HCT116 (cell line): ENCODE measurements at regions of chr5 and their contacts with region 1.

Region 1: GRCh38 chr5:67998709-67999261 is 216.8 kb upstream of the PIK3R1 start:
- DNase-seq: peak; percentile 64
- ATAC-seq: peak; percentile 89
- H3K4me3 ChIP-seq: peak overlapping the region in 1 of 2 experiments; percentile 4; a peak in 2 of 4 replicates
- H3K27ac ChIP-seq: no peak overlapping the region; the same call in 1 of the 2 replicates
- H3K4me1 ChIP-seq: peaks cover 4 to 27% of the 10 kb centered on the region in 2 experiments; a peak in 3 of 4 replicates
- H3K27me3 ChIP-seq: no peaks in the 10 kb centered on the region
- CTCF ChIP-seq: no peak
- POLR2A ChIP-seq: no peak
- RAD21 ChIP-seq: no peak

Region 2: DNA sequence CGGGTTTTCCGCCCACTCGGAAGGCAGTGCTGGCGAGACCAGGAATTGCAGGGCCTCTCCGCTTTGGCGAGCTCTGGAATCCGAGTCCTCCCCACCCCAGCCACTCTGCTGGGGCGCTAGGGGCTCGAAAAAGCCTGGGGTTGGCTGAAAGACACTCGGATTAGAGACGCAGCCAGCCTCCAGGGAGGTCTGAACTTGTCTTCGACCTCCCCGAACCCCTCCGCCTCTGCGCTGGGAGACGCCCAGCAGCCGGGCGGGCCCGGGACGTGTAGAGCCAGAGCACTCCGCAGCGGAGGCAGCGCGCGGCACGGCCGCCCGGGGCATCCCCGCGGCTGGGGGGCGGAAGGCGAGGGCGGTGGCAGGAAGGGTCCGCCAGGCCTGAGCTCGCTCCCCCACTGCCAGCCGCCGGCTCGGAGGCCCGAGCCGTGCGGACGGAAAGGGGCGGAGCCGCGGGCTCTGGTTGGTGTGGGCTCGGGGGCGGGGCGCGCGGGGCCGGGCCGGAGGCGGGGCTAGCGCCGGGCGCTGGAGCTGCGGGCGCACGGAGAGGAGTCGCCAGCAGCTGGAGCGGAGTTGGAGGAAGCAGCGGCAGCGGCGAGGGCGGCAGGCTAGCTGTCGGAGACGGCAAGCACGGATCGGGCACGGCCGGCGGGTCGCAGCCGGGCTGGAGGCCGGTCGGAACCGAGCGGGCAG is 216.6 kb after region 1 on chr5 and contains the start of gene PIK3R1:
- CTCF ChIA-PET with region 1: interaction called, 3 read pairs
- POLR2A ChIA-PET with region 1: interaction called, 4 read pairs
- RAD21 ChIA-PET with region 1: no interaction called
- intact Hi-C with region 1: loop called (anchors 1 kb)
- DNase-seq: peak; percentile 64
- ATAC-seq: peak; percentile 87
- H3K4me3 ChIP-seq: peak within 1 kb of the TSS; percentile 83 to 86
- H3K27ac ChIP-seq: peak within 1 kb of the TSS; percentile 97
- H3K4me1 ChIP-seq: peaks cover 11 to 16% of the 10 kb centered on the region in 2 experiments; a peak in 2 of 4 replicates
- H3K27me3 ChIP-seq: no peaks in the 10 kb centered on the region
- CTCF ChIP-seq: peak in 2 of 3 experiments; percentile 13 to 32; a peak in 3 of 6 replicates
- POLR2A ChIP-seq: peak; percentile 73
- RAD21 ChIP-seq: no peak
- total RNA-seq, gene PIK3R1: 7.2 TPM